Posterior vena cava (tissue), 2 donors: ENCODE measurements at regions of chr11 and their contacts with region 1.

Region 1: DNA sequence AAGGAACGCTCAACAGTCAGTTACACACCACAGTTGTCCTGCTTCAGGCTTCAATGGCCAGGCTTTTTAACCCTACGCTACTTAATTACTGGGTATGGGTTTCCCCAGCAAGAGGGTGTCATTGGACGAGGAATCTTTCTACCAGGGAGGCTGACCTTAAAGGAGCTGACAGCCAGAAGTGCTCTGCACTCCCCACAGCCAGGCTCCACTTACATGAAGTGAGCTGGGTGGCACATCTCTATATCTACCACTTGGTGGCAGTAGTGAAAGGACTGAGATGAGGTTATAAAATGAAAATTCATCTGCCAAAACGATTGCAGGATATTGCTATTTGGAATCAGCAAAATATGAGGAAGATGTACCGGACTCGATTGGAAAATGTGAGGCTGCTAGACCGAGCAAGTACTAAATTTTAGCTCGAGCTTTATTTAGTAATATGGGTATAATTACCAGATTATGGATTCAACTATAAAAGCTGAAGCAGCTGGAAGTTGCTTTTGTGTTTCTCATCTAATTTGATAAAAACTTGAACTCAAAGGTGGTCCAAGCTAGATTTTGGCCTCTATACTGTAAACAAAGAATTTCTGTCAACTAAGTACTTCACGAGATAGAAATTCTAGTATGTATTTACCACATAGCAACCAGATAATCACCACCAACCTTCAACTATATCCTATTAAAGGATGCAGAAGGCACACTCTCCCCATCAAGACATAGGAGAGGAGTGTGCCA is 53.9 kb upstream of the CEP126 start:
- DNase-seq: no peak

Region 2: GRCh38 chr11:101987370-101987769 is 126.5 kb after region 1 on chr11:
- intact Hi-C with region 1: no loop called
- DNase-seq: no peak

Region 3: GRCh38 chr11:102007567-102008437 is 146.9 kb after region 1 on chr11:
- intact Hi-C with region 1: loop called (anchors 2 to 10 kb)
- DNase-seq: no peak